ENCODE measurements at regions of chr3 and their contacts with region 1.

Region 1: DNA sequence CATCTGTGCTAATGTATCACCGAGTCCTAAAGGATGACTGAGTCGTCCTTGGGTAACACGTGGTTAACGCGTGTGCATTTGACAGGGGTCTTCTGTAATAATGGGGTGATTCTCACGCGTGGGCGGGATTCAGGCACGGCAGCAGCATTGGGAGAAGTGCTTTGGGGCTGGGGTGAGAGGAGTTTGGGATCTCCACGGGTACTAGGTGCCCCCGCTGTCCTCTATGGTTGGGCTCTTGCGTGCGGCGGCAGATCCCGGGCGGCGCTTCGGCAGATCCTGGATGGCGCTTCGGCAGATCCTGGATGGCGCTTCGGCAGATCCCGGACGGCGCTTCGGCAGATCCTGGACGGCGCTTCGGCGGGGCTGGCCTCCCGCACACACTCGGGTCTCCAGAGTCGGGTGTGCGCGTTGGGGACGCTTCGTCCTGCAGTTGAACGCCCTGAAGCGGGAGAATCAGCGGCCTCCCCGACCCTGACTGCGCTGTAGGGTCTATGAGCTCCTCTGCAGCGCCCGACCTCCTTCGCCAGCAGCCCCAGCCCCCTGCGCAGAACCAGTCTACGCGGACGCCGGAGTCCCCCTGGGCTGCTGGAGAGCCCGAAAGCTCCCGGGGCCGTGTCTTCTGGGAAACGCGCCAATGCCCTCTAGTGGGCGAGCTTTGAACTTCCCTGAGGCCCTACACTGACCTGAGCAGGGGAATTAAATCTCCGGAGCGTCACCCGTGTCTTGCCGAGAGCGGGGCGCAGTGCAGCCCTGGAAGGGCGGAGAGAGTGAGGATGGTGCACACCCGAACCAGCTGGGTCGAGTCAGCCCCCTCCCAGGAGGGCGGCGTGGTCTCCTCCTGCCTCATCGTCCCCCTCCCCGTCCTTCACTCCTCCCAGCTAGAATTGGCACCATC is 48.1 kb upstream of the EPHB3 start:
- DNase-seq: peak; percentile 89
- ATAC-seq: peak; percentile 100
- H3K4me3 ChIP-seq: peak overlapping the region in 4 of 5 experiments; percentile 15 to 46 (median 40)
- H3K4me3 Mint-ChIP-seq: peak overlapping the region; percentile 64
- H3K27ac ChIP-seq: no peak overlapping the region
- H3K27ac Mint-ChIP-seq: no peak overlapping the region
- H3K4me1 ChIP-seq: peaks cover 11 to 14% of the 10 kb centered on the region in 2 donors
- H3K4me1 Mint-ChIP-seq: peaks cover 14% of the 10 kb centered on the region
- H3K27me3 ChIP-seq: peaks cover 0 to 33% (median 25%) of the 10 kb centered on the region in 4 experiments
- H3K27me3 Mint-ChIP-seq: peaks cover 70% of the 10 kb centered on the region
- CTCF ChIP-seq: peak; percentile 86

Region 2: DNA sequence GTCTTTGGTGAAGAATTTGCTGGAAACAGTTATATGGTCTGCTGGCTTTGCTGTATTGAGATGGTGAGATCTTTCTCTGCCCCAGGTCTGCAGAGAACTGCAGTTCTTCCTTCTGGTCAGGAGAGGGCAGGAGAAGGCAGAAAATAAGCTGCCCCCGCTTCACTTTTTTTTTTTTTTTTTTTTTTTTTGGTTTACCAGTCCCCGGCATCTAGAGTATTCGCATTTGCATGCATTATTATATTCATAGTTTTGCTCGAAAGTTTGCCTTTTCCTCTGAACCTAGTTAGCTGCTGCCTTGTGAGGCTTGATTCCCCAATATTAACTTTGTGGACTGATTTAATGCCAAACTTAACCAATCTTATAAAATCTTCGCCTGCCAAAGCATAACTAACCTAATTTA is 618.2 kb before region 1 on chr3:
- CTCF ChIA-PET with region 1: interaction called, 24 read pairs
- POLR2A ChIA-PET with region 1: no interaction called
- intact Hi-C with region 1: no loop called
- DNase-seq: peak; percentile 73
- ATAC-seq: peak; percentile 96
- H3K4me3 ChIP-seq: no peak overlapping the region
- H3K4me3 Mint-ChIP-seq: no peak overlapping the region
- H3K27ac ChIP-seq: no peak overlapping the region
- H3K27ac Mint-ChIP-seq: no peak overlapping the region
- H3K4me1 ChIP-seq: peaks cover 0 to 2% of the 10 kb centered on the region in 2 donors
- H3K4me1 Mint-ChIP-seq: no peaks in the 10 kb centered on the region
- H3K27me3 ChIP-seq: peaks cover 0 to 9% (median 0%) of the 10 kb centered on the region in 4 experiments
- H3K27me3 Mint-ChIP-seq: peaks cover 37% of the 10 kb centered on the region
- CTCF ChIP-seq: peak; percentile 86

Region 3: GRCh38 chr3:184371570-184372018 is 141.9 kb before region 1 on chr3:
- CTCF ChIA-PET with region 1: interaction called, 107 read pairs
- POLR2A ChIA-PET with region 1: no interaction called
- intact Hi-C with region 1: loop called (anchors 1 kb)
- DNase-seq: peak; percentile 68
- ATAC-seq: peak; percentile 82
- H3K4me3 ChIP-seq: no peak overlapping the region
- H3K4me3 Mint-ChIP-seq: no peak overlapping the region
- H3K27ac ChIP-seq: no peak overlapping the region
- H3K27ac Mint-ChIP-seq: no peak overlapping the region
- H3K4me1 ChIP-seq: no peaks in the 10 kb centered on the region
- H3K4me1 Mint-ChIP-seq: peaks cover 2% of the 10 kb centered on the region
- H3K27me3 ChIP-seq: peaks cover 0 to 12% (median 0%) of the 10 kb centered on the region in 4 experiments
- H3K27me3 Mint-ChIP-seq: peaks cover 15% of the 10 kb centered on the region
- CTCF ChIP-seq: peak; percentile 72

Region 4: DNA sequence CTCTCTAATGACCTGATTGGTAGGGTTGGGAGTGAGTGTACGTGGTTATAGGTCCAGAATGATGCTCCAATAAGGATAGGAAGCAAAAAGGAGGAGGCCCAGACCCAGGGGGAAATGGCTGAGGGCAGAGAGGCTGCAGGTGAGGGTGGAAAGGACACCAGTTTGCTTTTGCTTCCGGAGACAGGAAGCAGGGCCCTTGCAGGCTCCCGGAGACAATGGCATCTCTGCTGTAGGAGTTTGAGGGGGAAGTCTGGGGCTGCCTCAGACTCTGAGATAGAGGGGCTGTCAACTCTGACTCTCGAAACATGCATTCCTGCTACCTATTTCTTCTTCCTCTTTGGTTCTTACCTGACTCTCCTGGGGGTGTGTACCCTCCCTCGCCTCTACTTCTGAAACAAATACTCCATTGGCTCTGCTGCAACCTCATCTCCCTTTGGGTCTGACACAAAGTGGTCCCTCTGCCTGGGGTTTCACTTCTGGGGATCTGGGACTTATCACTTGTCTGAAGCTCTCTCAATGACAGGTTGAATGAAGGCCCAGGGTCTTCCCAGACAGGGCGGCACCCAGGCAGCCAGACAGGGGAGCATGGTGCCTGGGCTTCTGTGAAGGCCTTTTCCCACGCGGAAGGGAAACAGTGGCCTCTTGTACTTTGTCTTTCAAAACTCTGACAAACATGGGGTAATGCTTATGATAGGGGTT is 72.2 kb before region 1 on chr3:
- CTCF ChIA-PET with region 1: no interaction called
- POLR2A ChIA-PET with region 1: no interaction called
- intact Hi-C with region 1: no loop called
- DNase-seq: no peak
- ATAC-seq: no peak
- H3K4me3 ChIP-seq: no peak overlapping the region
- H3K4me3 Mint-ChIP-seq: no peak overlapping the region
- H3K27ac ChIP-seq: no peak overlapping the region
- H3K27ac Mint-ChIP-seq: no peak overlapping the region
- H3K4me1 ChIP-seq: no peaks in the 10 kb centered on the region
- H3K4me1 Mint-ChIP-seq: no peaks in the 10 kb centered on the region
- H3K27me3 ChIP-seq: no peaks in the 10 kb centered on the region
- H3K27me3 Mint-ChIP-seq: peaks cover 4% of the 10 kb centered on the region
- CTCF ChIP-seq: no peak

Region 5: GRCh38 chr3:184469423-184469822 is 44.1 kb before region 1 on chr3:
- CTCF ChIA-PET with region 1: interaction called, 10 read pairs
- POLR2A ChIA-PET with region 1: no interaction called
- intact Hi-C with region 1: no loop called
- DNase-seq: peak; percentile 37
- ATAC-seq: no peak
- H3K4me3 ChIP-seq: no peak overlapping the region
- H3K4me3 Mint-ChIP-seq: no peak overlapping the region
- H3K27ac ChIP-seq: no peak overlapping the region
- H3K27ac Mint-ChIP-seq: no peak overlapping the region
- H3K4me1 ChIP-seq: peaks cover 27 to 31% of the 10 kb centered on the region in 2 donors
- H3K4me1 Mint-ChIP-seq: peaks cover 38% of the 10 kb centered on the region
- H3K27me3 ChIP-seq: peaks cover 0 to 8% (median 2%) of the 10 kb centered on the region in 4 experiments
- H3K27me3 Mint-ChIP-seq: peaks cover 18% of the 10 kb centered on the region
- CTCF ChIP-seq: no peak

Region 6: GRCh38 chr3:184523825-184524615 is 10.5 kb after region 1 on chr3:
- CTCF ChIA-PET with region 1: interaction called, 26 read pairs
- POLR2A ChIA-PET with region 1: interaction called, 3 read pairs
- intact Hi-C with region 1: no loop called
- DNase-seq: no peak
- ATAC-seq: no peak
- H3K4me3 ChIP-seq: no peak overlapping the region
- H3K4me3 Mint-ChIP-seq: no peak overlapping the region
- H3K27ac ChIP-seq: no peak overlapping the region
- H3K27ac Mint-ChIP-seq: no peak overlapping the region
- H3K4me1 ChIP-seq: peaks cover 8 to 13% of the 10 kb centered on the region in 2 donors
- H3K4me1 Mint-ChIP-seq: peaks cover 9% of the 10 kb centered on the region
- H3K27me3 ChIP-seq: peaks cover 0 to 41% (median 29%) of the 10 kb centered on the region in 4 experiments
- H3K27me3 Mint-ChIP-seq: peaks cover 54% of the 10 kb centered on the region
- CTCF ChIP-seq: no peak

Region 7: DNA sequence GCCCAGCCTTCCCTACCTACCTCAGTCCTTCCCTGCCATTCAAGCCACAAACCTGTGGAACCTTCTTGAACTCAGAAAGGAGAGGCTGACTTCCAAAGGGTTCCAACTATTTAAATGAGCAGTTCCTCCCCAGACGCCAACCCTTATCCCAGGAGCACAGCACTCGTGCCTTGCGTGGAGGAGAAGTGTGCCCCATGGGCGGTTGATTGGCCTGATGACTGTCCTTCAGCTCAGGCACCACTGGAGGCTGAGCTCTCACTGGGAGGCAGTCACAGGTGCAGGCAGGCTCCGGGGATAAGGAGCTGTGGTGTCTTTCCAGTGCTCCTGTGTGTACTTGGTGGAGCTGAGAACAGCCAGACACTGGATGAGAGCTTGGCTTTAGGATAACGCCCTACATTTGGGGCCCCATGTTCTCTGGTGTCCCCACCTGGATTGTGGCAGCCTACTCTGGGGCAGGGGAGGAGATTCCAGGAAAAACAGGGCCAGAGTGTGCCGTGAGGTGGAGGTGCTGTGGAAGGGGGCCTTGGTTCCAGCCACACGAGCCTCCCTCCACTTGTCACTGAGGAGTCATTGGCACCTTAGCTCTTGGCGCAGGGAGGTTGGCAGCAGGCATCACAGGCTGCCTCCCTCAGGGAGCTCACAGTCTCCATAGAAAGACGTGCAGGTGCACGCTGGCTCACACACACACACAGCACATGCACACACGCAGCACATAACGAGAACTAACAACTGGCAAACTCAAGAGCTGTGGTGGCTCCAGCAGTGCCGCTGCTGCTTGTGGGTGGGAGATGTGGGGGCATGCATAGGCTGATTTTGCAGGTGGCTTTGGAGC is 25.3 kb after region 1 on chr3:
- CTCF ChIA-PET with region 1: interaction called, 14 read pairs
- POLR2A ChIA-PET with region 1: no interaction called
- intact Hi-C with region 1: no loop called
- DNase-seq: no peak
- ATAC-seq: no peak
- H3K4me3 ChIP-seq: no peak overlapping the region
- H3K4me3 Mint-ChIP-seq: no peak overlapping the region
- H3K27ac ChIP-seq: no peak overlapping the region
- H3K27ac Mint-ChIP-seq: no peak overlapping the region
- H3K4me1 ChIP-seq: peaks cover 2% of the 10 kb centered on the region in 2 donors
- H3K4me1 Mint-ChIP-seq: no peaks in the 10 kb centered on the region
- H3K27me3 ChIP-seq: peaks cover 0 to 19% (median 5%) of the 10 kb centered on the region in 4 experiments
- H3K27me3 Mint-ChIP-seq: peaks cover 38% of the 10 kb centered on the region
- CTCF ChIP-seq: no peak

Measured in B cell (primary cell).